B cell (primary cell): ENCODE measurements at regions of chr1 and their contacts with region 1.

Region 1: DNA sequence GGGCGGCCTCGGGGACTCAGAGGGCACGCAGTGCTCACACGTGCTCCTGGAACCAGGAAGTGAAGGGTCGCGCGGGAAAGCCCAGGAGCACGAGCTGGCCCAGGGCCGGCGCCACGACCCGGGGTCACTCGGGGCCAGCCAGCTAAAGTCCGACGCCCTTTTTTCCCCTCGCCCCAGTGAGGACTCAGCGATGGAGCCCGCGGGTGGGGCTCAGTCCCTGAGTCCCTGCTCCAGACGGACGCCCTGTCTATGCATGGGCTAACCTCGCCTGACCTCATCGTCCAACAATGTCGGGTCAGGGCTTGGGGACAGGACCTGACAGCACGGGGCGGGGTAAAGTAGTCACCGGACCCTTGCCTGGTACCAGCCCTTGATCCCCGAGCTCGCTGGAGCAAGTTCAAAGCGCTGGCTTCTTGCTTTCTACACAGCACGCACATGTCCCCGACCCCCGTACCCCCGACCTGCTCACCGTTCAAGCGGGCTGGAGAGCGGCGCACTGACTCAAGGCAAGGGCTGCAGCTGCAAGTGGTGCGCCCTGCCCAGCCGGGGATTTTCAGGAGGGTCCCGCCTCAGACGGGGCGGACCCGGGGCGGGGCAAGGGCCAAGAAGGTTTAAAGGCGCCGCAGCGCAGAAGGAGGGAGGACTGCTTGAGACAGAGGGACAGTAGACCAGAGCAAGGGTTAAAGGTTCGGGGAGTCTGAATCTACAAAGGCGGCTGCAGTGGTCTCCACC is at the start of gene TAGLN2:
- DNase-seq: peak; percentile 93
- ATAC-seq: peak; percentile 65
- H3K4me3 ChIP-seq: peak within 1 kb of the TSS; percentile 81 to 100 (median 99)
- H3K4me3 Mint-ChIP-seq: peak within 1 kb of the TSS; percentile 96
- H3K27ac ChIP-seq: peak within 1 kb of the TSS; percentile 98 to 100
- H3K27ac Mint-ChIP-seq: peak within 1 kb of the TSS; percentile 99
- H3K4me1 ChIP-seq: peaks cover 40 to 45% of the 10 kb centered on the region in 2 donors
- H3K4me1 Mint-ChIP-seq: peaks cover 50% of the 10 kb centered on the region
- H3K27me3 ChIP-seq: no peaks in the 10 kb centered on the region
- H3K27me3 Mint-ChIP-seq: no peaks in the 10 kb centered on the region
- CTCF ChIP-seq: no peak
- total RNA-seq, gene TAGLN2: 342 and 354 TPM in 2 replicates

Region 2: GRCh38 chr1:159780583-159781582 is 144.3 kb before region 1 on chr1 and contains the start of gene DUSP23:
- CTCF ChIA-PET with region 1: interaction called, 4 read pairs
- POLR2A ChIA-PET with region 1: interaction called, 3 read pairs
- intact Hi-C with region 1: loop called (anchors 1 kb)
- DNase-seq: peak; percentile 96
- ATAC-seq: peak; percentile 97
- H3K4me3 ChIP-seq: peak within 1 kb of the TSS; percentile 65 to 74 (median 71)
- H3K4me3 Mint-ChIP-seq: peak within 1 kb of the TSS; percentile 92
- H3K27ac ChIP-seq: peak within 1 kb of the TSS in 1 of 2 donors; percentile 53
- H3K27ac Mint-ChIP-seq: peak within 1 kb of the TSS; percentile 90
- H3K4me1 ChIP-seq: peaks cover 13 to 15% of the 10 kb centered on the region in 2 donors
- H3K4me1 Mint-ChIP-seq: peaks cover 9% of the 10 kb centered on the region
- H3K27me3 ChIP-seq: peaks cover 0 to 4% (median 0%) of the 10 kb centered on the region in 4 experiments
- H3K27me3 Mint-ChIP-seq: peaks cover 2% of the 10 kb centered on the region
- CTCF ChIP-seq: peak; percentile 78
- total RNA-seq, gene DUSP23: 9.5 and 9.6 TPM in 2 replicates

Region 3: DNA sequence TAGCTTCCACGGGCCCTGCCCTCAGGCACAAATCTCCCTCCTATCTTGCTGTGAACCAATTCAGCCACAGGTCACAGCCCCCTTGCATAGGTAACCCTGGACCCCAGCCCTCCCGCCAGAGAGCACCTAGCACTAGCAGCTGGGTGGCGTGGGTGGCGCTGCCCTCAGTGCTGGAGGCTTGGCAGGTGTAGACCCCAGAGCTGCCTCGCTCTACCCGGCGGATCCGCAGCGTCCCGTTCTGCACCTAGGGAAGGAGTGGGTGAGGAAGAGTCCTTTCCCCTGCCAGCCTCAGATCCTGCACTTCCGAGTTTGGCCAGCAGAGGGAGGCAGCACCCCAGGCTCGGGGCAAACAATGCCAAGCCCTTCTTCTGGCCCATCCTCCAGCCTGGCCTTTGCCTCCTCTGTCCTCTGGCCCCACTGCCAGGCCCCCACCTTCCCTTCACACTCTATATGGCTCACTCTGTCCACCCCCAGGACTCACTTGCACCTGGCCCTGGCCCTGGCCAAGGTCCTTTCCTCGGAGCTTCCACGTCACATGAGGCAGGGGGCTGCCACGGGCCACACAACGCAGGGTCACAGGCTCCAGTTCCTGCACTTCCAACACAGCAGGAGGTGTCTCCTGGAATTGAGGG is 11.2 kb after region 1 on chr1:
- CTCF ChIA-PET with region 1: interaction called, 76 read pairs
- POLR2A ChIA-PET with region 1: interaction called, 5 read pairs
- intact Hi-C with region 1: loop called (anchors 1 kb)
- DNase-seq: peak; percentile 85
- ATAC-seq: peak; percentile 89
- H3K4me3 ChIP-seq: peak overlapping the region in 1 of 5 experiments; percentile 17
- H3K4me3 Mint-ChIP-seq: peak overlapping the region; percentile 49
- H3K27ac ChIP-seq: no peak overlapping the region
- H3K27ac Mint-ChIP-seq: peak overlapping the region; percentile 61
- H3K4me1 ChIP-seq: peaks cover 37 to 43% of the 10 kb centered on the region in 2 donors
- H3K4me1 Mint-ChIP-seq: peaks cover 47% of the 10 kb centered on the region
- H3K27me3 ChIP-seq: no peaks in the 10 kb centered on the region
- H3K27me3 Mint-ChIP-seq: peaks cover 4% of the 10 kb centered on the region
- CTCF ChIP-seq: peak; percentile 96

Region 4: DNA sequence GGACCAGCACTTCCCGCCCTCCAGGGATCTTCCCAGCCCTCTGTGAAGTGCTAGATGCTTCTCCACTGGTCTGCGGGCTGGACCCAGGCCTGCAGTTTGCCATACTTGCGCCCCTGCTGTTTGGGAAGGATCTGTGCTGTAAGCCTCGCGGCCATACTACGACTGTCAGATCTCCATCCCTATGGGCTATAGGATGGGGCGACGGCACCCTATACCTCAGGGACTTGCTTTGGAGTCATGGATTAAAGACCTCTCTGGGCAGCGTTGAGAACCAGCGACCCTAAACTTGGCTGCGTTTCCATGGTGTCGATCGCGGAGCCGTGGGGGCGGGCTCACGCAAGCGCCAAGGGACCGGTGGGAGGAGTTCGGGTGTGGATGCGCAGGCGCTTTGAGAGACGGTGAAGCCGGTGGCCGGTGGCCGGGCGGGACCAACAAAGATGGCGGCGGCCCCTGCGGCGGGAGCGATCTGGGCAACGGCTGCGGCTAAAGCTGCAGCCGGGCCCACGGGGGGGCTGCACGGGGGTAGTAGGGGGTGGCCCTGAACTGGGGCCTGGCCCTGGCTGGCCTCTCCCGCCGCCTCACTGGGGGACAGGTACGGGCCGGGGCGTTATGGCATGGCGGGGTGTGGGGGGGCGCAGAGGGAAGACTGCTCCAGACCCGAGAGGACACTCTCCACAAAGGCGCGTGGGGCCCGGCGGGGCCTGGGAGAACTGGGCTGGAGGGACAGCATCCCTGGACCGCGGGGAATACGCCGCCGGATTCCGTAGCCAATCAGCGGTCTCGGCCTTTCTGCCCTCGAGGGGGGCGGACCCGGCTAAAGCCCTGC is 1234.2 kb after region 1 on chr1 and contains the start of gene USP21:
- CTCF ChIA-PET with region 1: no interaction called
- POLR2A ChIA-PET with region 1: no interaction called
- intact Hi-C with region 1: no loop called
- DNase-seq: peak; percentile 94
- ATAC-seq: peak; percentile 96
- H3K4me3 ChIP-seq: peak within 1 kb of the TSS; percentile 69 to 92 (median 85)
- H3K4me3 Mint-ChIP-seq: peak within 1 kb of the TSS; percentile 92
- H3K27ac ChIP-seq: peak within 1 kb of the TSS; percentile 74 to 76
- H3K27ac Mint-ChIP-seq: peak within 1 kb of the TSS; percentile 93
- H3K4me1 ChIP-seq: peaks cover 31 to 33% of the 10 kb centered on the region in 2 donors
- H3K4me1 Mint-ChIP-seq: peaks cover 55% of the 10 kb centered on the region
- H3K27me3 ChIP-seq: no peaks in the 10 kb centered on the region
- H3K27me3 Mint-ChIP-seq: no peaks in the 10 kb centered on the region
- CTCF ChIP-seq: no peak
- total RNA-seq, gene USP21: 50.2 and 53.3 TPM in 2 replicates

Region 5: DNA sequence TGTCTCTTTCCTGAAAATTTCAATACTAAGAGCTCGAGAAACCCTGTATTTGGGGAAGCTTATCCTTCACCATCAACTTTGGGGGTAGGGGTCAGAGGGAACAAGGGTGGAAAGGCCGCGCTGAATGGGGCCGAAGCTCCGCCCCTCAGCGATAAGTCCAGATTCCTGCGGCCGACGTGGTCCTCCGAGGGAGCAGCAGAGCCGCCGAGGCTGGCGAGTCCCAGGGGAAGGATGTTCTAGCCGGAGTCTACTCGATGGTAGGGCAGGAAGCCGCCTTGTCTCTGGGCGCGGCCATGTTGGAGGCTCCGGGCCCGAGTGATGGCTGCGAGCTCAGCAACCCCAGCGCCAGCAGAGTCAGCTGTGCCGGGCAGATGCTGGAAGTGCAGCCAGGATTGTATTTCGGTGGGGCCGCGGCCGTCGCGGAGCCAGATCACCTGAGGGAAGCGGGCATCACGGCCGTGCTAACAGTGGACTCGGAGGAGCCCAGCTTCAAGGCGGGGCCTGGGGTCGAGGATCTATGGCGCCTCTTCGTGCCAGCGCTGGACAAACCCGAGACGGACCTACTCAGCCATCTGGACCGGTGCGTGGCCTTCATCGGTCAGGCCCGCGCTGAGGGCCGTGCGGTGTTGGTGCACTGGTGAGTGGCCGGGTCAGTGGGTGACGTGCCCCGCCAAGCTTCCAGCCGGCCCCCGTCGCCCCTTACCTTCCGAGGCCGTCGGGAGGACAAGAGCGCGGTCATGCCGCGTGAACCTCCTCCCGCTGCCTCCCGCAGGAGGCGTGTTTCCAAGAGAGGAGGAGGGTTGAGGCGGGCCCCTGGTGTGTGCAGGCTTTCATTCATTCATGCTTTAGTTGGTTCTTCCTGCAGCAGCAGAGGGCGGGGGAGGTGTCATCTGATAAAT is 1824.6 kb after region 1 on chr1 and contains the start of gene DUSP12:
- CTCF ChIA-PET with region 1: no interaction called
- POLR2A ChIA-PET with region 1: no interaction called
- intact Hi-C with region 1: loop called (anchors 10 kb)
- DNase-seq: peak; percentile 93
- ATAC-seq: peak; percentile 98
- H3K4me3 ChIP-seq: peak within 1 kb of the TSS; percentile 59 to 94 (median 83)
- H3K4me3 Mint-ChIP-seq: peak within 1 kb of the TSS; percentile 100
- H3K27ac ChIP-seq: peak within 1 kb of the TSS; percentile 29 to 66
- H3K27ac Mint-ChIP-seq: peak within 1 kb of the TSS; percentile 97
- H3K4me1 ChIP-seq: peaks cover 18 to 27% of the 10 kb centered on the region in 2 donors
- H3K4me1 Mint-ChIP-seq: peaks cover 32% of the 10 kb centered on the region
- H3K27me3 ChIP-seq: no peaks in the 10 kb centered on the region
- H3K27me3 Mint-ChIP-seq: peaks cover 8% of the 10 kb centered on the region
- CTCF ChIP-seq: no peak
- total RNA-seq, gene DUSP12: 41.2 and 41.9 TPM in 2 replicates